Endothelial cell of umbilical vein (primary cell): ENCODE measurements at regions of chr6 and their contacts with region 1.

Region 1: DNA sequence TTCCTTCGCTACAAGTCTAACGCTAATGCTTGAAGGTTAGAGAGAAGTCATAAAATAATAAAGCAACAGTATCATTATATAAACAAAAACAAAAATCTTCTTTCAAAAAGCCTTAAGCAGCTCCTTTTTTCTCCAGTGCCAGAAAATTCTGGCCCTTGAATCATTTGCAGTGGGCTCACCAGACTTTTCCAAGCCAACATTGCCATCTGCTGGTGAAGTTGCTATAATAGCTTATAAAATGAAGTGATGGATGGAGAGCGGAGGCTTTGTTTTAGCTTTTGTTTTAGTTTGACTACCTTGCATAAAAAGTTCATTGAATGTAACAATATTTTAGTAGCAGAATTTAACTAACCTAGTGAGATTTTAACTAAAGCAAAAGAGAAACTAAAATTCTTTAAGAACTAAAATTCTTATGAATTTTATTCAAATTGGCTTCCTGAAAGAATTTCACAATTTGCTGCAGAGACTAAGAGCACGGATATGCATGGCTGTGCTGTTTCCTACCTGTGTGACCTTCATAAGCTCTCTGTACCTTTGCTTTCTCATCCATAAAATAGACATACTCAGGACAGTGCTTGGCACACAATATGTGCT is 44.8 kb upstream of the SLC2A12 start:
- DNase-seq: peak; percentile 65
- H3K4me3 ChIP-seq: no peak overlapping the region
- H3K27ac ChIP-seq: no peak overlapping the region
- H3K4me1 ChIP-seq: no peaks in the 10 kb centered on the region
- H3K27me3 ChIP-seq: peaks cover 21 to 27% of the 10 kb centered on the region in 2 experiments
- CTCF ChIP-seq: peak; percentile 41 to 46
- POLR2A ChIP-seq: no peak

Region 2: DNA sequence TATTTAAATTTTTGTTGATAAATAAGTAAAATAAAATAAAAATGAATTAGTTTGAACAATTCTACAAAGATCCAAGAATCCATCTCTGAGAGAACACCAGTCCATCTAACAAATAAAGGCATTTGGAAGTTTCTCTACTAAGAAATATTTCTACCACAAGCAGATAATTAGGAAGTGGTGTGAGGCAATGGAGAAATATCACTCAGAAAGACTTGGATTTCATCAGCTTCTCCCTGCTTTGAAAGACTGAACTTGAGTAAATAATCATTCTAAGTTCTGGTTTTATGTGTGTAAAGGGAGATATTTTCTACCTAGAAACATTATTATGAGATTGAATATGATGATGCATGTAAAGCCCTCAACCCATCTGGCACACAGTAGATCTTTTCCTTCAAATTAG is 226.1 kb before region 1 on chr6:
- CTCF ChIA-PET with region 1: no interaction called
- POLR2A ChIA-PET with region 1: no interaction called
- dilution Hi-C with region 1: no loop called
- intact Hi-C with region 1: no loop called
- DNase-seq: no peak
- H3K4me3 ChIP-seq: no peak overlapping the region
- H3K27ac ChIP-seq: no peak overlapping the region
- H3K4me1 ChIP-seq: no peaks in the 10 kb centered on the region
- H3K27me3 ChIP-seq: peaks cover 3 to 8% of the 10 kb centered on the region in 2 experiments
- CTCF ChIP-seq: no peak
- POLR2A ChIP-seq: no peak

Region 3: GRCh38 chr6:133916650-133917151 is 180.5 kb before region 1 on chr6:
- CTCF ChIA-PET with region 1: interaction called, 983 read pairs
- POLR2A ChIA-PET with region 1: no interaction called
- dilution Hi-C with region 1: no loop called
- intact Hi-C with region 1: no loop called
- DNase-seq: peak; percentile 83
- H3K4me3 ChIP-seq: no peak overlapping the region
- H3K27ac ChIP-seq: no peak overlapping the region
- H3K4me1 ChIP-seq: no peaks in the 10 kb centered on the region
- H3K27me3 ChIP-seq: peaks cover 9 to 37% of the 10 kb centered on the region in 2 experiments
- CTCF ChIP-seq: peak; percentile 89 to 90
- POLR2A ChIP-seq: no peak

Region 4: DNA sequence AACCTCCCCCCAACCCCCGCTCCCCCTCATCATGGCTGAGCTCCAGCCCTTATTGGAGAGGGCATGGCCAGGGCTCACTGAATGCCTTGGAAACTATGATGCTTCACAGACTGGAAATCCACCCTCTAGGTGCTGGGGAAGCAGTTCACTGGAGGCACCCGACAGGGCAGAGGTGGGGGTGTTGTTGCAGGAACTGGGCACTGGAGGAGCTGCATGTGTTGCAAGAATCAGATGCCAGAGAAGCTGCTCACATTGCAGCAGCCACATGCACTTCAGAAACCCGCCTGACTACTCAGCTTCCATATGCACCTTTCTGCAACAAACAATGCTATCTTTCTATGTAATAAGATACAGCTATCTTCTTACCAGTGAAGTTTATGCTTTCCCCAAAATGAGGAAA is 152.1 kb before region 1 on chr6:
- CTCF ChIA-PET with region 1: interaction called, 19 read pairs
- POLR2A ChIA-PET with region 1: no interaction called
- dilution Hi-C with region 1: no loop called
- intact Hi-C with region 1: no loop called
- DNase-seq: no peak
- H3K4me3 ChIP-seq: no peak overlapping the region
- H3K27ac ChIP-seq: no peak overlapping the region
- H3K4me1 ChIP-seq: no peaks in the 10 kb centered on the region
- H3K27me3 ChIP-seq: peaks cover 19 to 20% of the 10 kb centered on the region in 2 experiments
- CTCF ChIP-seq: no peak
- POLR2A ChIP-seq: no peak

Region 5: DNA sequence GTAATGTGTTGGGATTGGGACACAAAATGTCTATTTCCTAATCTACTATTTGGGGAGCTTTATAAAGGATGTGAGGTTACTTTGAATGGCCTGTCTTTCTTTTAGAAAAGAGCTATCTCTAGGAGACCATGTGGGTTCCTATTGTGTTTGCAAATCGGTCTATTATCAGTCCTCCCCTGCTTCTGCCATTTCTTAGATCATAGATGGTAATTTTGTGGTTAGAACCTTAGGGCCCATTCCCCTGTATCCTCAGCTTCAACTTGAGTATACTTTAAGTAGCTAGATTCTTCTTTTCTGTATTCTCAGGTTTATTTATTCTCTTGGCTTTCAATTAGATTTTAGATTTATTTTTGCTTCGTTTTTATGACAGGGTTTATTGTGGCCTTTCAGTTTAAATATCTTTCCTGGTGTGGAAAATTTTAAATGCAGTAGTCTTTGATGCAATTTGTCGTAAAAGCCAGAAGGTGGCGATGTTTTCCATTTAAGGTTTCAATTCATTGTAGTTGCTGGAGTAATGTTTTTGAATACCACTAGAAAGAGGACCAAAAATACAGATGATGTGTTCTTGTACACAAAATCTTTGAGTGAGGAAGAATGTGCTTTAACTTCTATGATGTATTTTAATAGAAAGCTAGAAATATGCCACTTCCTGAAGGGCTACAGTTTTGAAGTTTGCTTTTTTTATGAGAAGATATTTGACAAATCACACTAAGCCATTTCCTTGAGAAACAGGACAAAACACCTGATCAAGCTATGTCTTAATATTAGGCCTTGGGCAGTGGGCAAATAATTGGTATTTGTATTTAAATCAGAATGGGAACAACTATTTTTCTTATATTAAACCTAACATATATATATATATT is 123.9 kb before region 1 on chr6:
- CTCF ChIA-PET with region 1: interaction called, 142 read pairs
- POLR2A ChIA-PET with region 1: no interaction called
- dilution Hi-C with region 1: no loop called
- intact Hi-C with region 1: loop called (anchors 1 kb)
- DNase-seq: peak; percentile 64
- H3K4me3 ChIP-seq: no peak overlapping the region
- H3K27ac ChIP-seq: no peak overlapping the region
- H3K4me1 ChIP-seq: peaks cover 4% of the 10 kb centered on the region
- H3K27me3 ChIP-seq: no peaks in the 10 kb centered on the region
- CTCF ChIP-seq: peak; percentile 42 to 45
- POLR2A ChIP-seq: no peak

Region 6: GRCh38 chr6:134063966-134064445 is 33.2 kb before region 1 on chr6:
- CTCF ChIA-PET with region 1: interaction called, 80 read pairs
- POLR2A ChIA-PET with region 1: no interaction called
- dilution Hi-C with region 1: no loop called
- intact Hi-C with region 1: loop called (anchors 1 kb)
- DNase-seq: peak; percentile 80
- H3K4me3 ChIP-seq: no peak overlapping the region
- H3K27ac ChIP-seq: no peak overlapping the region
- H3K4me1 ChIP-seq: peaks cover 10% of the 10 kb centered on the region
- H3K27me3 ChIP-seq: no peaks in the 10 kb centered on the region
- CTCF ChIP-seq: peak; percentile 85 to 89
- POLR2A ChIP-seq: no peak

Region 7: GRCh38 chr6:134123666-134124208 is 26.5 kb after region 1 on chr6:
- CTCF ChIA-PET with region 1: interaction called, 13 read pairs
- POLR2A ChIA-PET with region 1: no interaction called
- dilution Hi-C with region 1: no loop called
- intact Hi-C with region 1: no loop called
- DNase-seq: peak; percentile 76
- H3K4me3 ChIP-seq: no peak overlapping the region
- H3K27ac ChIP-seq: no peak overlapping the region
- H3K4me1 ChIP-seq: no peaks in the 10 kb centered on the region
- H3K27me3 ChIP-seq: no peaks in the 10 kb centered on the region
- CTCF ChIP-seq: peak; percentile 38 to 42
- POLR2A ChIP-seq: no peak